ENCODE measurements at regions of chr15 and their contacts with region 1.

Region 1: GRCh38 chr15:91271565-91272153 is 171.6 kb downstream of the SV2B start:
- DNase-seq: peak in 1 of 2 donors; percentile 42
- H3K4me3 ChIP-seq: no peak overlapping the region
- H3K27ac ChIP-seq: no peak overlapping the region
- H3K4me1 ChIP-seq: no peaks in the 10 kb centered on the region
- H3K27me3 ChIP-seq: peaks cover 0 to 6% of the 10 kb centered on the region in 2 donors
- CTCF ChIP-seq: peak; percentile 80 to 85

Region 2: GRCh38 chr15:91055548-91056331 is 215.9 kb before region 1 on chr15:
- intact Hi-C with region 1: loop called (anchors 2 kb)
- DNase-seq: peak in 1 of 2 donors; percentile 36
- H3K4me3 ChIP-seq: no peak overlapping the region
- H3K27ac ChIP-seq: no peak overlapping the region
- H3K4me1 ChIP-seq: no peaks in the 10 kb centered on the region
- H3K27me3 ChIP-seq: peaks cover 0 to 45% of the 10 kb centered on the region in 2 donors
- CTCF ChIP-seq: peak; percentile 67 to 76

Region 3: DNA sequence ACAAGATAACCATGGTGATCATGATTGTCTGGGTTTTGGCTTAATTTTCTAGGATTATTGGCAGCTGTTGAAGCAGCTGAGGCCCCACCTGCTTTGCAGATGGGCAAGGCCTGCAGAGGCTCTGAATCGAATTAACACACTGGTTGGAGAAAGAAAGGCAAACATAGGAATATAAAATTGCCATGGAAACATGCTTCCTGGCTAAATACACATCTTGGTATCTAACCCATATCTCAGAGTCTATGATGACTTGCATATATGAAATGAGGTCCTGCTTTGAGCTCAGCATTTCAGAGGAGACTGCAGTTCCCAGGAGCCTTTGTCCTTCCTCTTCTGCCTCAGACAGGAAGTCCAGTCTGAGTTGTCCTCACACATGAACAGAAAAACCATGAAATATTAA is 195.9 kb before region 1 on chr15:
- intact Hi-C with region 1: no loop called
- DNase-seq: no peak
- H3K4me3 ChIP-seq: no peak overlapping the region
- H3K27ac ChIP-seq: no peak overlapping the region
- H3K4me1 ChIP-seq: no peaks in the 10 kb centered on the region
- H3K27me3 ChIP-seq: no peaks in the 10 kb centered on the region
- CTCF ChIP-seq: no peak

Measured in tibial artery (tissue), 4 donors.